ENCODE measurements at regions of chr13 and their contacts with region 1.

Region 1: GRCh38 chr13:102773441-102774215 is at the start of gene TEX30:
- DNase-seq: peak; percentile 89
- H3K4me3 Mint-ChIP-seq: peak within 1 kb of the TSS; percentile 85
- H3K27ac Mint-ChIP-seq: peak within 1 kb of the TSS; percentile 94
- H3K4me1 Mint-ChIP-seq: peaks cover 39% of the 10 kb centered on the region
- H3K27me3 Mint-ChIP-seq: no peaks in the 10 kb centered on the region
- total RNA-seq, gene TEX30: 42.6 to 43.2 TPM

Region 2: GRCh38 chr13:102394158-102395053 is 379.2 kb before region 1 on chr13:
- CTCF ChIA-PET with region 1: no interaction called
- POLR2A ChIA-PET with region 1: interaction called, 5 read pairs
- intact Hi-C with region 1: loop called (anchors 1 kb)
- DNase-seq: peak; percentile 97
- H3K4me3 Mint-ChIP-seq: peak overlapping the region; percentile 78
- H3K27ac Mint-ChIP-seq: peak overlapping the region; percentile 69
- H3K4me1 Mint-ChIP-seq: peaks cover 21% of the 10 kb centered on the region
- H3K27me3 Mint-ChIP-seq: peaks cover 10% of the 10 kb centered on the region

Region 3: GRCh38 chr13:102657630-102658029 is 116.0 kb before region 1 on chr13:
- CTCF ChIA-PET with region 1: interaction called, 3 read pairs
- POLR2A ChIA-PET with region 1: no interaction called
- intact Hi-C with region 1: loop called (anchors 5 kb)
- DNase-seq: no peak
- H3K4me3 Mint-ChIP-seq: no peak overlapping the region
- H3K27ac Mint-ChIP-seq: no peak overlapping the region
- H3K4me1 Mint-ChIP-seq: no peaks in the 10 kb centered on the region
- H3K27me3 Mint-ChIP-seq: no peaks in the 10 kb centered on the region

Region 4: DNA sequence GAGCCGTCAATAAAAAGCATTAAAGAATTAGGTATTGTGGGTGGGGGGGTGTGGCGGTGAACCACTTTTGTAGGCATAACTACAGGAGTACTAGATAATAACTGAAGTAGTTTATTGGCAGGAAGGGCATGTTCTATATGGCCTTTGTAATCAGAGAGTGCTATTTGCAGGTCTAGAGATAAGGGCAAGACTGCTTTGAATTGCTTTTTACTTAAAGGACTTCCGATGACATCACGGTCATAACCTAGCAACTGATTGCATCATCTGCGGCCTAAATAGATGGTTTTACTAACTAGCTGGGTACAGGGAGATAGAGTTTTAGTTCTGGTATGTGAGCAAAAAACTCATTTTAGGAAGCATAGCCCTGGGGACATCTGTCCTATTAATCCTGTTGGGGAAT is 103.5 kb before region 1 on chr13:
- CTCF ChIA-PET with region 1: no interaction called
- POLR2A ChIA-PET with region 1: no interaction called
- intact Hi-C with region 1: no loop called
- DNase-seq: no peak
- H3K4me3 Mint-ChIP-seq: no peak overlapping the region
- H3K27ac Mint-ChIP-seq: no peak overlapping the region
- H3K4me1 Mint-ChIP-seq: no peaks in the 10 kb centered on the region
- H3K27me3 Mint-ChIP-seq: no peaks in the 10 kb centered on the region

Region 5: DNA sequence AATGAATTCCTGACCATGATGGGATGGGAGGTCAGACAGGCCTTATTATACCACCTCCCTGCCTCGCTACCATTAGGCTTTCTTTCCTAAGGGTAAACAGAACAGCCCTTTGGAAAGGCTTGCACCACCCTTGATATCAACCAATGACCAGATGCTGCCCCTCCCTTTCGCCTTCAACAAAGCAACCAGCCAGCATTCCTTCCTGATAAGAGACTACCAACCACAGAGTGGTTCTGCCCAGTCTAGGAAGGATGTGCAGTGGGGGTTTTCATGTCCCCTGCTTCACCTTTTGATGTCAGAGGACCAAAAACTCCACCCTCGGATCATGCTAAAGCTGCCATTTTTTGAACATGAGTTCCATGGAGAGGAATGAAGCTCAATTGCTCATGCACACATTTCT is 21.7 kb before region 1 on chr13:
- CTCF ChIA-PET with region 1: no interaction called
- POLR2A ChIA-PET with region 1: no interaction called
- intact Hi-C with region 1: no loop called
- DNase-seq: no peak
- H3K4me3 Mint-ChIP-seq: no peak overlapping the region
- H3K27ac Mint-ChIP-seq: no peak overlapping the region
- H3K4me1 Mint-ChIP-seq: no peaks in the 10 kb centered on the region
- H3K27me3 Mint-ChIP-seq: peaks cover 16% of the 10 kb centered on the region

Region 6: DNA sequence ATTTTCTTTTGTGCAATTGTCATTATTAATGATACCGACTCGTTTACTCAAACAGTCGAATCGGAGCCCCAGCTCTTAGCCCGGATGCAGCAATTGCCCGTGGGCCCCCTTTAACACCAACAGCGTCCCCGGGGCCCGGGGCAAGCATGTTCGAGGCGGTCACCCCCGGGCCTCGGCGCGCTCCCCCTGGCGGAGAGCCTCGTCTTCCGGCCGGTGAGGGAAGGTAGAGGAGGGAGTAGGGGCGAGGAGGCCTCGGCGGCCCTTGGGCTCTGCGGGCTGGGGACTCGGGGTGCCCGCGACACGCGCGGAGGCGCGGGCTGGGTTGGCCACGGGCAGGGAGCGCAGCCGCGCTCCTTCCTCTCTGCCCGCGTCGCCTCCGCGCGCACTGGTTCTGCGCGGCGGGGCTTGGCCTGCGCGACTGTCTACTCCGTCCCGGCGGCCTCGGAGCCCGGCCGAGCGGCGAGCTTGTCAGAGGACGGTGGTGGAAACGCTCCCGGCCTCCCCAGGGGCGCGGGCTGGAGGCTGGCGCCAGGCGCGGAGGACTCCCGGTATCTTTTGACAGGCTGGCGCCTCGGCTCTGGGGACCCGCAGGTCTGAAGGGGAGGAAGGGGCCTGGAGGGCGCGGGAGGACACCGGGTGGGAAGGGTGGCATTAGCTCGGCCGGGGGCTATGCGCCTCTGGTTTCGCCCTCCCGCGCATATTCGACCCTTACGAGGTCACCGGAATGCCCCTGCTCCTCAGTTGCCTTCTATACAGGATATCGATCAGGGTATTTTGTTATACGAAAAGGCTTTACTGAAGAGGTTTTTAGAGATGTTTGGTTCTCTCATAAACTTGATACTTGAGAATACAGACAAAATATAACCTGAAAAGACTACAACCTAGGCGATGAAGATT is 26.8 kb after region 1 on chr13:
- CTCF ChIA-PET with region 1: interaction called, 20 read pairs
- POLR2A ChIA-PET with region 1: interaction called, 28 read pairs
- intact Hi-C with region 1: loop called (anchors 1 kb)
- DNase-seq: peak; percentile 88
- H3K4me3 Mint-ChIP-seq: peak overlapping the region; percentile 90
- H3K27ac Mint-ChIP-seq: peak overlapping the region; percentile 38
- H3K4me1 Mint-ChIP-seq: peaks cover 22% of the 10 kb centered on the region
- H3K27me3 Mint-ChIP-seq: peaks cover 5% of the 10 kb centered on the region

Region 7: DNA sequence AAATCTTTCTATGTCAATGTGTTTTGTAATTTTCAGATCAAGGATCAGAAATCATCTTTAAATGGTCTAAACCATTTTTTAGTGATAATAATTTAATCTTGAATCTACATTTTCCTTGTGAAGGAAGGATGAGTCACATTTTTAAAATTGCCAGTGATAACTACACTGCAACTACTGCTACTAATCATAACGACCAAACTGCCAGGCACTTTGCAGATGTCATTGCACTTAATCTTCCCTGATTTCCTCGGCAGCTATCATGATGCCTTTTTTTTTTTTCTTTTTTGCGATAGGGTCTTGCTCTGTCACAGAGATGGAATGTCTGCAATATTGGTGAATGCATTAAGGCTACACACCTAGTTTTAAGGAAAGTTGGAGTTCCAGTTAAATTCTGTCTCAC is 334.0 kb after region 1 on chr13:
- CTCF ChIA-PET with region 1: no interaction called
- POLR2A ChIA-PET with region 1: no interaction called
- intact Hi-C with region 1: no loop called
- DNase-seq: no peak
- H3K4me3 Mint-ChIP-seq: no peak overlapping the region
- H3K27ac Mint-ChIP-seq: no peak overlapping the region
- H3K4me1 Mint-ChIP-seq: no peaks in the 10 kb centered on the region
- H3K27me3 Mint-ChIP-seq: no peaks in the 10 kb centered on the region

Measured in activated CD4-positive, alpha-beta memory T cell treated with anti-CD3 and anti-CD28 coated beads for 36 hours (primary cell).